Cardiac septum (tissue), 1 donor: ENCODE measurements at regions of chr3 and their contacts with region 1.

Region 1: GRCh38 chr3:179322286-179323196 is at the start of gene ZNF639:
- DNase-seq: peak; percentile 88
- total RNA-seq, gene ZNF639: 25.5 TPM

Region 2: DNA sequence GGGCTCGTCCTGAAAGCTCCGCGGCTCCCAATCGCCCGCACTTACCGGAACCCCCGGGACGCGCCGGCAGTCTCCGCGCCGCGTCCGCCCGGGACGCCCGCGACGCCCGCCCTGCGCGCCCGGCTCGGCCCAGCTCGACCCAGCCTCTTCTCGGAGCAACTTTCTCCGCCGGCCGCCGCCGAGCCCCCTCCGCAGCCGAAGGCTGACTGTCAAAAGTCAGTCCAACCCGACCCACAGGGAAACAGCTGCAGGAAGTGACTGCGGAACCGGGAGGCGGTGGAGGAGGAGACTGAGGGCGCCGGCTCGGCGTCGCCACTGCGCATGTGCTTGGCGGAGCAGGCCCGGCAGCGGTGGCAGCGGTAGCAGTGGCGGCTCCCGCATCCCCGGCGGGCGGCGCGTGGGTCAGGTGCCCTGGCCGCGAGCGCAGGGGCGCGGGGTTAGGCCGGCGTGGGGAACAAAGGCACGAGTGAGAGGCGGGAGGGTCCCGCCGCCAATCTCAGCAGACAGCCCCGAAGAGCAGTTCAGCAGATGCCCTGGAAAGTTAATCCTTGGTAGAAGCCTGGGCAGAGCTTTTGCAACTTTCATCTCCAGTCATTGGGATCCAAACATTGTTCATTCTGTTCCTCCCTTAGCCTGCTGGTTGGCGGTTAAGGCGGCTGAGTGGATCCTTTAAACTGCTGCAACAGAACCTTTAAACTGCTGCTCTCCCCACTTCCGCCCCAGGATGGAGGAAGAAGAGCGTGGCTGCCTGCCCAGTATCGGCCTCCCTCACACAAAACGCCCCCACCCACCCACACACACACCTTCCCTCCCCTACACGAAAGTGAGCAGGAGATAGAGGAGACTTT is 250.8 kb before region 1 on chr3 and contains the start of gene ZMAT3:
- intact Hi-C with region 1: loop called (anchors 2 kb)
- DNase-seq: peak; percentile 95
- total RNA-seq, gene ZMAT3: 18.3 TPM

Region 3: GRCh38 chr3:179105881-179106280 is 216.7 kb before region 1 on chr3:
- intact Hi-C with region 1: loop called (anchors 2 kb)
- DNase-seq: no peak

Region 4: DNA sequence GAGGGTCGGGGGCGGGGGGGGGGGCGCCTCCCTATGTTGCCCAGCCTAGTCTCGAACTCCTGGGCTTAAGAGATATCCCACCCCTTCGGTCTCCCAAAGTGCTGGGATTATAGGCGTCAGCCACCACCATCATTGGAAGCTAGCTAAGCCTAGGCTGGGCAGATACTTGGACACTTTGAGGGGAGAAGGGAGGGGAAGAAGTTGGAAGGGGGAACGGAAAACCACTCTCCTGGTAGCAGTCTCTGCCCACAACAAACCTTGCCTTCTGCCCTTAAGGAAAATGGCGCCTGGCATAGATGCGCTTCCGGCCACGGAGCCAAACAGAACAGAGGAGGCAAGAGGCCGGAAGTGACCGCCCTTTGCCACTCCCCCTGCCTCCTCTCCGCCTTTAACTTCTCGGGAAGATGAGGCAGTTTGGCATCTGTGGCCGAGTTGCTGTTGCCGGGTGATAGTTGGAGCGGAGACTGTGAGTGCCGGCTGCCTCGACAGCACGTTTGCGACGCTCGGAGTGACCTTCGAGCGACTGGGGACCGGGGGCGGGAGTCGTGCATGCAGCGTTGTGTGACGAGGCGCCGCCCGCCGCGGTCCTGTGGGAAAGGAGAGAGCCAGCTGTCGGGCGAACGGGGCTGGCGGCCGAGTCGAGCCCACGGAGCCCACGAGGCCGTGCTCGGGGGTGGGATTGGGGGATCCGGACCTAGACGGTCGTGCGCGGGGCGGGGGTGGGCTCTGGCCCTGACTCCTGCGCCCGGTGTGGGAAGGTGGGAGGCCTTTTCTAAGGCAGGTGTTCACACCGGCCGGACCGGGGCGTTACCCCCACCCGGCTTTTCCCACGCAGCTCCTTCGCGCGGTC is 25.0 kb after region 1 on chr3 and contains the start of gene MFN1:
- intact Hi-C with region 1: loop called (anchors 2 kb)
- DNase-seq: peak; percentile 97
- total RNA-seq, gene MFN1: 49.2 TPM